Mammary epithelial cell (primary cell): ENCODE measurements at regions of chr14 and their contacts with region 1.

Region 1: DNA sequence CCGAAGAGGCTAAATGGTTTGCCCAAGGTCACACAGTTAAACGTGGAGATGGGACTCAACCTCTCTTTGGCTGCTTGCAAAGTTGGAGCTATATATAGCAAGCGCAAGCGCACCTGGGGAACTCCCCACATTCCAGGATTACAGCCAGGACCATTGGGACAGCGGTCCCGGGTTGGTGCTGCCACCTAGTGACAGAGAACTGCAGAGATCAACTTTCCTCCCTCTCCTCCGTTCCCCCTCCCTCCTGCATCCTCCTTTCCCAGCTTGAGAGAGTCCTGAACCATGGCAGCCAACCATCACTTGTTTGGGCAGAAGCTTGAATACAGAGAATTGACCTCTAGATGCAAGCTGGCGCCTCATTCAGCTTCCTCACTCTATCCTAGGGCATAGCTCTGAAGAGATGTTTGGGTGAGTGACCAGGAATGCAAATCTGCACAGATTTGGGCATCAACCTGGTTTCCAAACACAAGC is 17.4 kb upstream of the FLVCR2 start:
- DNase-seq: peak; percentile 86
- H3K4me3 ChIP-seq: no peak overlapping the region
- H3K27ac ChIP-seq: no peak overlapping the region
- H3K4me1 ChIP-seq: peaks cover 16% of the 10 kb centered on the region
- H3K27me3 ChIP-seq: no peaks in the 10 kb centered on the region
- CTCF ChIP-seq: peak; percentile 91 to 97

Region 2: GRCh38 chr14:75467763-75468420 is 93.1 kb before region 1 on chr14:
- CTCF ChIA-PET with region 1: no interaction called
- dilution Hi-C with region 1: no loop called
- in situ Hi-C with region 1: no loop called
- intact Hi-C with region 1: no loop called
- DNase-seq: no peak
- H3K4me3 ChIP-seq: no peak overlapping the region
- H3K27ac ChIP-seq: no peak overlapping the region
- H3K4me1 ChIP-seq: no peaks in the 10 kb centered on the region
- H3K27me3 ChIP-seq: no peaks in the 10 kb centered on the region
- CTCF ChIP-seq: no peak

Region 3: GRCh38 chr14:75487155-75487671 is 73.8 kb before region 1 on chr14:
- CTCF ChIA-PET with region 1: interaction called, 9 read pairs
- dilution Hi-C with region 1: no loop called
- in situ Hi-C with region 1: loop called in 1 of 2 experiments (anchors 5 kb)
- intact Hi-C with region 1: loop called (anchors 1 kb)
- DNase-seq: peak; percentile 76
- H3K4me3 ChIP-seq: no peak overlapping the region
- H3K27ac ChIP-seq: no peak overlapping the region
- H3K4me1 ChIP-seq: peaks cover 8% of the 10 kb centered on the region
- H3K27me3 ChIP-seq: no peaks in the 10 kb centered on the region
- CTCF ChIP-seq: no peak

Region 4: GRCh38 chr14:75518625-75519024 is 42.4 kb before region 1 on chr14:
- CTCF ChIA-PET with region 1: interaction called, 5 read pairs
- dilution Hi-C with region 1: no loop called
- in situ Hi-C with region 1: no loop called
- intact Hi-C with region 1: loop called (anchors 1 kb)
- DNase-seq: no peak
- H3K4me3 ChIP-seq: no peak overlapping the region
- H3K27ac ChIP-seq: no peak overlapping the region
- H3K4me1 ChIP-seq: peaks cover 6% of the 10 kb centered on the region
- H3K27me3 ChIP-seq: no peaks in the 10 kb centered on the region
- CTCF ChIP-seq: peak; percentile 38 to 43

Region 5: DNA sequence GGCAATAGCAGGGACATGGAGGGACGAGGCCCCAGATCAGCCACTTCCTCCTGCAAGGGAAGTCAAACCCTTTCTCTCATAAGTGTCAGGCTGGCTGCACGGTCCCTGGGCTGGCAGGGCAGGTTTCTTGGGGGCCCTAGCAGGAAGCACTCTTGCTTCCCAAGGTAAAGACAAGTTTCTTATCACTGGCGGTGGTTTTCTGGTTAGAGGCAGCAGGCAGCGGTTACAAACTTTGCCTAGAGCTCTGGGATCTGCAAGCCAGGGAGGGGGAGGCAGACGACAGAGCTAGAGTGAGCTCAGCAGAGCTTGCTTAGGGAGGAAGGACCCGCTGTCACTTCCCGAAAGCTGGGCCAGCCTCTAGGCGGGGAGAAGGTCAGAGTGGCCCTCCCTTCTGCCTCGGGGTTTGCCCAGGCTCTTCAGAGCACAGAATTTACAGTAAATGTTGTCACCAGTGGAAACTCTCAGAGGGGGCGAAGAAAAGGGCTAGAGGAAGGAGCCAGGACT is 18.4 kb before region 1 on chr14:
- CTCF ChIA-PET with region 1: no interaction called
- dilution Hi-C with region 1: no loop called
- in situ Hi-C with region 1: no loop called
- intact Hi-C with region 1: no loop called
- DNase-seq: no peak
- H3K4me3 ChIP-seq: no peak overlapping the region
- H3K27ac ChIP-seq: no peak overlapping the region
- H3K4me1 ChIP-seq: no peaks in the 10 kb centered on the region
- H3K27me3 ChIP-seq: no peaks in the 10 kb centered on the region
- CTCF ChIP-seq: no peak

Region 6: GRCh38 chr14:75960231-75960630 is 399.2 kb after region 1 on chr14:
- CTCF ChIA-PET with region 1: no interaction called
- dilution Hi-C with region 1: no loop called
- in situ Hi-C with region 1: no loop called
- intact Hi-C with region 1: no loop called
- DNase-seq: no peak
- H3K4me3 ChIP-seq: no peak overlapping the region
- H3K27ac ChIP-seq: no peak overlapping the region
- H3K4me1 ChIP-seq: no peaks in the 10 kb centered on the region
- H3K27me3 ChIP-seq: no peaks in the 10 kb centered on the region
- CTCF ChIP-seq: no peak